ENCODE measurements at regions of chr19 and their contacts with region 1.

Region 1: DNA sequence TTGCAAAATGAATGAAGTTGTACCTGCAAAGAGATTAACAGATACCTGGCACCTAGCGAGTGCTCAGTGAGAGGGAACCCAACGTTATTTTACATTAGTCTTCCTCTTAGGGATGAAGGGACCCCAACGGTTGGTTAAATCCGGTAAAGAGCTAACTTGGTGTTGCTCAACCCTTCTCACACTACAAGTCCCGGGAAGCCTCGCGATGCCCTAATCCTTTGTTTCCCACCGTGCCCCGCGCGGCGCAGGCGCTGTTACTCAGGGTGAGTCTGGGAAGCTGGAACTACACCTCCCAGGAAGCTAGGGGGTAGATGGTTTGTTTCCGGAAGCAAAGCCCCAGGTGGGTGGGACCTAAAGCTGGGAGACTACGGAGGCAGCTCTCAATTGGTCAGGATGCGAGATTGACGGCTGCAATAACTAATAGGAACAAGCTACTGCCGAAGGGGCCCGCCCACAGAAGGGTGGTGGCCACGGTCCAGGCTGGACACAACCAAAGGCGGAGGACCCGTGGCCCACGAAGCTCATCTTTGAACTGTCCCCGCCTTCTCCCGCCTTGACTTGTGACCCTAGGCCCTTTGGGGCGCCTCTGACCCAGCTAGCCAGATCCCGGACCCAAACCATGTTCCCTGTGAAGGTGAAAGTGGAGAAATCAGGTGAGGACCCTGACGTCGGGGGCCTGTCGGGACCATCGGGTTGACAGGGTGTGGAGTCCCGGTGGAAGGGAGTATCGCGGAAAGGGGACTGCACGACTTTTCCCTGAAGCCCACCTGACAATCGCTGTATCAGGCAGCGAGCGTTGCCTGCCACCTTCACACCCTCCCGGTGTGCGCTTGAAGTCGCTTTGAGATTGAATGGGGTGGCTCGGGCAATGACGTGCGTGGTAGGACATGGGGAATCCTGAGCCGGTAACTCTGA is at the start of gene LIN37:
- DNase-seq: peak; percentile 99 to 100 (median 100)
- H3K4me3 ChIP-seq: peak within 1 kb of the TSS; percentile 66 to 100 (median 92)
- H3K27ac ChIP-seq: peak within 1 kb of the TSS in 50 of 59 donors; percentile 1 to 92 (median 70)
- H3K27me3 ChIP-seq: no peaks in the 10 kb centered on the region
- CTCF ChIP-seq: peak in 48 of 56 donors; percentile 9 to 62 (median 40)
- total RNA-seq, gene LIN37: 10.0 to 30.5 (median 18.1) TPM

Region 2: GRCh38 chr19:35702223-35703012 is 45.9 kb before region 1 on chr19:
- intact Hi-C with region 1: loop called in 1 of 2 experiments (anchors 5 kb)
- DNase-seq: peak; percentile 97 to 100 (median 99)
- H3K4me3 ChIP-seq: peak overlapping the region; percentile 51 to 91 (median 71)
- H3K27ac ChIP-seq: peak overlapping the region in 20 of 59 donors; percentile 25 to 75 (median 46)
- H3K27me3 ChIP-seq: no peaks in the 10 kb centered on the region
- CTCF ChIP-seq: peak in 26 of 56 donors; percentile 1 to 52 (median 20)

Measured in dorsolateral prefrontal cortex (tissue), 120 donors.